ENCODE measurements at regions of chr9 and their contacts with region 1.

Region 1: GRCh38 chr9:29211580-29212396 is 1638.5 kb upstream of the C9orf72 start:
- DNase-seq: no peak
- ATAC-seq: no peak
- H3K4me3 ChIP-seq: no peak overlapping the region
- H3K27ac ChIP-seq: no peak overlapping the region
- H3K4me1 ChIP-seq: no peaks in the 10 kb centered on the region
- H3K27me3 ChIP-seq: no peaks in the 10 kb centered on the region
- CTCF ChIP-seq: no peak

Region 2: DNA sequence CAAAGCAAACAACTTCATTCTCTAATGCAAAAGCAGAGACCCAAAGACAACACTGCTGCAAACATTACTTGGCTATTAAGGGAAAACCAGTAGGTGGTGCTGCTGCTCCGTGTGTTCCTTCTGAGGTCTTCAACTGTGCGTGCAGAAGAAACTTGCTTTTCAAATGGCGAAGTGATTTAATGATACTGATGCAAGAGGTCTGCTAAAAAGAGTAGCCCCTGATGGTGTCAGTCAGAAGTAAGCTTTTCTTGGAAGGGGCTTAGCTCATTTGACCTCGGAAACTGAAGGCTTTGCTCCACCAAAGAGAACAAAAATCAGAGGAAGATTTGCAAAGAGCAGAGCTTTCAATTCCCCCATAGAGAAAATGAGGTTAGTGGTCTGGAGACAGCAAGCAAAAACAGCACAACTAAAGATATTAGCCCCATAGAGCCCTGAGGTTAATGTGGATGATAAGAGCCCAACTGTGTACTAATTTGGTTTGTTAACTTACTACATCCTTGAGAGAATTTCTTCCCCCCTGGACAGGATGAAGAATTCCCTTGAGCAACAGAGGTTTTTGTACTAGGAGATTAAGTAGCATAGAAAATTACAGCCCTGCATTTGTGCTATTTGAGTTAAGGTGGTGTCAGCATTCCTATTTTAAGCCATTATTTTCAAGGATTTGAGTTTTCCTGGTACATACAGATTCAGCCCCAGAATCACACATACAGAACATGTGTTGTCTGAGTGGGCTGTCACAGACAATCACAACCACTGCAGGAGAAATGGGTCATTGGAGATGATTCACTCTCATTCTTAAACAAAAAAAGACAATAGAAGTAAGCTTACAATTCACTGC is 1485.3 kb before region 1 on chr9:
- CTCF ChIA-PET with region 1: no interaction called
- POLR2A ChIA-PET with region 1: no interaction called
- intact Hi-C with region 1: loop called (anchors 2 kb)
- DNase-seq: peak; percentile 77
- ATAC-seq: peak; percentile 81
- H3K4me3 ChIP-seq: no peak overlapping the region
- H3K27ac ChIP-seq: no peak overlapping the region
- H3K4me1 ChIP-seq: no peaks in the 10 kb centered on the region
- H3K27me3 ChIP-seq: peaks cover 14% of the 10 kb centered on the region; the same call in 1 of the 2 replicates
- CTCF ChIP-seq: peak; percentile 81

Region 3: DNA sequence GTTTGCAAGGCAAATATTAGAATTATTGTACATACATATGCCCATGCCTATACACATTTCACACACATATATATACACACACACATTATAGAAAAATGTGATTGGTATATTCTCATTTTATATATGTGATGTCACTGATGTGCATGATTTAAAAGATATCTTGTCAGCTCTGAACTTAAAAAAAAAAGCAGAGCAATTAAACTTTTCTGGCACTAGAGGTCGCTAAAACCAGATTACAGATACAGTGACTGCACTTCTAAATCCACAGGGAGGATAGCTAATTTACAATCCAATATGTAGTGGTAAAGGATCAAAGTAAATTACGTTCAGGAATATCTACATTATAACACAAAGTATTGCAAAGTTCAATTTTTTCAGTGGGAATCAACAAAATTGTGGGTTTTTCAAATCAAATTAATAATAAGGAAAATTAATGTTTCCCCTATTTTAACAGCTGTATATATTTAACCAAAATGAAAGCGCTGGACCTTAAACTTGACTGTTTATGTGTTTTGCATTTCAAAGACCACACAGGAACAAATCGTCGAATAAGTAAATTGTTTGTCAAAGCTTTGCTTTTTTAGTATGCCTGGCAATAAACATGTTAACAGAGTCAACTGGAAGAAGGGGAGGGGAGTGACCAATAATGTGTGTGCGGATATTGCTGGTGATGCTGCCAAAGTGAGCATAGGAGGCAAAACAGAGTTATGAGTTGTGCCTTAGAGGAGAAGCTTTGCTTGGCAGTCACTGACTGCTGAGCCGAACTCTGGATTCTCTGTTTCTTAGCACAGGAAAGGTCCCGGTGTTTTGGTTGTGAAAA is 437.2 kb before region 1 on chr9:
- CTCF ChIA-PET with region 1: no interaction called
- POLR2A ChIA-PET with region 1: no interaction called
- intact Hi-C with region 1: loop called (anchors 2 kb)
- DNase-seq: peak; percentile 64
- ATAC-seq: no peak
- H3K4me3 ChIP-seq: no peak overlapping the region
- H3K27ac ChIP-seq: no peak overlapping the region
- H3K4me1 ChIP-seq: peaks cover 6% of the 10 kb centered on the region; the same call in 1 of the 2 replicates
- H3K27me3 ChIP-seq: no peaks in the 10 kb centered on the region
- CTCF ChIP-seq: peak; percentile 72

Region 4: GRCh38 chr9:28938981-28939380 is 272.8 kb before region 1 on chr9:
- CTCF ChIA-PET with region 1: no interaction called
- POLR2A ChIA-PET with region 1: no interaction called
- intact Hi-C with region 1: loop called (anchors 10 kb)
- DNase-seq: no peak
- ATAC-seq: no peak
- H3K4me3 ChIP-seq: no peak overlapping the region
- H3K27ac ChIP-seq: no peak overlapping the region
- H3K4me1 ChIP-seq: peaks cover 6% of the 10 kb centered on the region; the same call in 1 of the 2 replicates
- H3K27me3 ChIP-seq: no peaks in the 10 kb centered on the region
- CTCF ChIP-seq: no peak

Region 5: GRCh38 chr9:29078063-29078660 is 133.6 kb before region 1 on chr9:
- CTCF ChIA-PET with region 1: no interaction called
- POLR2A ChIA-PET with region 1: no interaction called
- intact Hi-C with region 1: loop called (anchors 5 kb)
- DNase-seq: peak; percentile 84
- ATAC-seq: peak; percentile 93
- H3K4me3 ChIP-seq: peak overlapping the region; percentile 38; the same call in 1 of the 2 replicates
- H3K27ac ChIP-seq: peak overlapping the region; percentile 92
- H3K4me1 ChIP-seq: peaks cover 23% of the 10 kb centered on the region
- H3K27me3 ChIP-seq: no peaks in the 10 kb centered on the region
- CTCF ChIP-seq: no peak

Region 6: GRCh38 chr9:29416204-29416603 is 204.4 kb after region 1 on chr9:
- CTCF ChIA-PET with region 1: no interaction called
- POLR2A ChIA-PET with region 1: no interaction called
- intact Hi-C with region 1: loop called (anchors 10 kb)
- DNase-seq: peak; percentile 54
- ATAC-seq: peak; percentile 56
- H3K4me3 ChIP-seq: peak overlapping the region; percentile 25; the same call in 1 of the 2 replicates
- H3K27ac ChIP-seq: peak overlapping the region; percentile 92
- H3K4me1 ChIP-seq: peaks cover 44% of the 10 kb centered on the region
- H3K27me3 ChIP-seq: no peaks in the 10 kb centered on the region
- CTCF ChIP-seq: no peak

Region 7: DNA sequence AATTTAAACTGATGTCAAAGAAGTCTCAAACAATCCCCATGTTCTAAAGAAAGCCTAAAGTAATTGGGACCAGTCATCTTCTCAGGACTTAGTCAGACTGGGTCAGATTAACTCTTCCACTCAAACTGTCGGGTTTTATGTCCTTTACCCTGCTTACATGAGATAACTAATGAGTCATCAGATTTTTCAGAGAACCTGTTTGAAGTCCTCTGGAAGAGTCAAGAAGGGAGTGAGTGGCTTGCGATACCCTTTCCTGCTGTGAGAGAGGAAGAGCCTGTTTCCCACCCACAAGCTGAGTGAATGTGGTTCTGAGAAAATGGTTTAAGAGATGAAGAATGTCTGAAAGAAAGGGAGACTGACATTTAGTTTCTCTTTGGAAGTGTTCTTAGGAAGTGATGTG is 228.2 kb after region 1 on chr9:
- CTCF ChIA-PET with region 1: no interaction called
- POLR2A ChIA-PET with region 1: no interaction called
- intact Hi-C with region 1: loop called (anchors 10 kb)
- DNase-seq: peak; percentile 93
- ATAC-seq: peak; percentile 91
- H3K4me3 ChIP-seq: peak overlapping the region; percentile 64
- H3K27ac ChIP-seq: peak overlapping the region; percentile 100
- H3K4me1 ChIP-seq: peaks cover 46% of the 10 kb centered on the region
- H3K27me3 ChIP-seq: no peaks in the 10 kb centered on the region
- CTCF ChIP-seq: no peak